Activated T-helper 1 cell treated with anti-CD3 and anti-CD28 coated beads, Interleukin-12 subunit alpha, Interleukin-12 subunit beta, Interleukin-2, Interleukin-4 antibody, amounts not matched to agents 30 ng/mL and 10 ng/mL and 1 ng/mL, durations not matched to agents 14 hours and 24 hours and 36 hours (primary cell): ENCODE measurements at regions of chr4 and their contacts with region 1.

Region 1: DNA sequence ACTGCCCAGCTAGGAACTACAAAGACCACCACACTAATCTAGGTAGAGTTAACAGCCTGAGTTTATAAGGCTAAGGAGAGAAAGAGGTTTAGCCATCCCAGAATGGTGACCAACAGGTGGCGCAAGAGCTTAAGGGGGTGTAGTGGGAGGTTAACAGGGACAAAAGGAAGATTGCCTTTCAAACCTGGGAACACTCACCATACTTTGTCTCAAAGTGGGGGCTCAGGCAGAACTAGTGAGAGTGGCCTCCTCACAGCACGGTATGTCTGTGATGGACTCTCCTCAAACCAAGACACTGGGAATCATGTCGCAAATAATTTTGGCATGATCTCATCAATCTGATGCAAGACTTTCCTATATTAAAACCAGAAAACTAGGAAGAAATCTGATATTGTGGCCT is 23.4 kb downstream of the CCNI start:
- DNase-seq: peak; percentile 29
- H3K4me3 Mint-ChIP-seq: no peak overlapping the region
- H3K27ac Mint-ChIP-seq: no peak overlapping the region
- H3K4me1 Mint-ChIP-seq: peaks cover 6% of the 10 kb centered on the region
- H3K27me3 Mint-ChIP-seq: no peaks in the 10 kb centered on the region

Region 2: GRCh38 chr4:77203380-77204197 is 151.2 kb after region 1 on chr4:
- intact Hi-C with region 1: loop called (anchors 1 kb)
- DNase-seq: peak; percentile 47
- H3K4me3 Mint-ChIP-seq: no peak overlapping the region
- H3K27ac Mint-ChIP-seq: no peak overlapping the region
- H3K4me1 Mint-ChIP-seq: peaks cover 13% of the 10 kb centered on the region
- H3K27me3 Mint-ChIP-seq: peaks cover 15% of the 10 kb centered on the region